Activated T-helper 2 cell treated with anti-CD3 and anti-CD28 coated beads, Interferon-gamma antibody, Interleukin-2, Interleukin-4, amounts not matched to agents 10 μg/mL and 5 μg/mL and 100 μg/mL, durations not matched to agents 14 hours and 24 hours and 36 hours (primary cell): ENCODE measurements at regions of chr13 and their contacts with region 1.

Region 1: DNA sequence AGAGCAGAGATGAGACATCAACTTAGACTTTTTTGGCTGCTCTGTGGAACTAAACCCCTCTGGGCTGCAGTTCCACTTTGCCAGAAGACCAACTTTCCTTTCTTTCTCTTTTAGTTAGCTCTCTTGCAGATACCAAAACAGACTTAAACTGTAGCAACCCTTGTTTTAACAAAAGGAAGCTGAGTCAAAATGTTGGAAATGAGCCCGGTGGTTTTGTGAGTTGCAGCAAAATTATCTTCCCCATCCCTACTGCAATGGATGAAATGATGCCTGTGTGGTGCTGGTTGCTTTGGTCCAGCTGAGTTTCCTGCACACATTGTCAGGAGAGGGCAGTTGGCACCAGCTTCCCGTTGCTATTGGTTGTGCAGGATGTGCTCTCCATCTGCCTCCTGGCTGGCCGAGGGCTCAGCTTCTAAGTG is 115.3 kb downstream of the LRCH1 start:
- DNase-seq: no peak
- H3K4me3 Mint-ChIP-seq: peak overlapping the region; percentile 68
- H3K27ac Mint-ChIP-seq: peak overlapping the region; percentile 71
- H3K4me1 Mint-ChIP-seq: peaks cover 36% of the 10 kb centered on the region
- H3K27me3 Mint-ChIP-seq: no peaks in the 10 kb centered on the region

Region 2: GRCh38 chr13:46593398-46593797 is 74.9 kb before region 1 on chr13:
- intact Hi-C with region 1: loop called (anchors 5 kb)
- DNase-seq: peak; percentile 15
- H3K4me3 Mint-ChIP-seq: no peak overlapping the region
- H3K27ac Mint-ChIP-seq: peak overlapping the region; percentile 3
- H3K4me1 Mint-ChIP-seq: peaks cover 51% of the 10 kb centered on the region
- H3K27me3 Mint-ChIP-seq: peaks cover 6% of the 10 kb centered on the region

Region 3: DNA sequence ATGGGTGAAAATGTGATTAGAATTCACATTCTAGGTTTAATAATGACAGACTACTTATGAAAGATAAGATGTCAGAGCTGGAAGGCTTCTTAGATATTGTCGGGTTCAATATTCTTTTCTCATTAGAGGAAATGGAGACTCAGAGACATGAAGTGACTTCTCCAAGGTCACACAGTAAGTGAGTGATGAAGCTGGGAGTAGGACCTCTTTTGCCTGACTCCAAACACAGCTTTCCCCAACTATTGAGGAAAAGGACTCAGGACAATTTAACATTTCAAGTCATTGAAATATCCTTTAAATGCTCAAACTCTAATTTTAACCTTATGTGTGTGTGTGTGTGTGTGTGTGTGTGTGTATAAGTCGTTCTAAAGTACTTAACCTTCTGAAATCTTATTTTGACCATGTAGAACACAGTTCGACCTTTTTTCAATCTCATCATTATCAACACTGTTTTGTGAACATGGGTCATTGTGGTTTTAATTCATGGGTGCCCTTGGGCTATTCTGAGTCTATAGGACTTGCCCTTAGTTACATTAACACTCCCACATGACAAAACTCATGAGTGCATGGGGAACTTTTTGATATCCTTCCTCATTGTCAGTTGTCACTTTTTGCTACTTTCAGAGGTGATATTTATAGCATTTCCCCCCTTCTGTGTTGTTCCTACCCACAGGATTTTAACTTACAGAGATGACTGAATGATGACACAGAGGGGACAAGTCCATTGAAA is 62.3 kb before region 1 on chr13:
- intact Hi-C with region 1: loop called (anchors 5 kb)
- DNase-seq: no peak
- H3K4me3 Mint-ChIP-seq: no peak overlapping the region
- H3K27ac Mint-ChIP-seq: peak overlapping the region; percentile 51
- H3K4me1 Mint-ChIP-seq: peaks cover 47% of the 10 kb centered on the region
- H3K27me3 Mint-ChIP-seq: no peaks in the 10 kb centered on the region

Region 4: GRCh38 chr13:46649816-46650215 is 18.5 kb before region 1 on chr13:
- intact Hi-C with region 1: loop called (anchors 2 kb)
- DNase-seq: no peak
- H3K4me3 Mint-ChIP-seq: no peak overlapping the region
- H3K27ac Mint-ChIP-seq: no peak overlapping the region
- H3K4me1 Mint-ChIP-seq: peaks cover 23% of the 10 kb centered on the region
- H3K27me3 Mint-ChIP-seq: no peaks in the 10 kb centered on the region

Region 5: GRCh38 chr13:46656786-46657185 is 11.5 kb before region 1 on chr13:
- intact Hi-C with region 1: loop called (anchors 1 kb)
- DNase-seq: no peak
- H3K4me3 Mint-ChIP-seq: no peak overlapping the region
- H3K27ac Mint-ChIP-seq: peak overlapping the region; percentile 45
- H3K4me1 Mint-ChIP-seq: peaks cover 31% of the 10 kb centered on the region
- H3K27me3 Mint-ChIP-seq: no peaks in the 10 kb centered on the region

Region 6: DNA sequence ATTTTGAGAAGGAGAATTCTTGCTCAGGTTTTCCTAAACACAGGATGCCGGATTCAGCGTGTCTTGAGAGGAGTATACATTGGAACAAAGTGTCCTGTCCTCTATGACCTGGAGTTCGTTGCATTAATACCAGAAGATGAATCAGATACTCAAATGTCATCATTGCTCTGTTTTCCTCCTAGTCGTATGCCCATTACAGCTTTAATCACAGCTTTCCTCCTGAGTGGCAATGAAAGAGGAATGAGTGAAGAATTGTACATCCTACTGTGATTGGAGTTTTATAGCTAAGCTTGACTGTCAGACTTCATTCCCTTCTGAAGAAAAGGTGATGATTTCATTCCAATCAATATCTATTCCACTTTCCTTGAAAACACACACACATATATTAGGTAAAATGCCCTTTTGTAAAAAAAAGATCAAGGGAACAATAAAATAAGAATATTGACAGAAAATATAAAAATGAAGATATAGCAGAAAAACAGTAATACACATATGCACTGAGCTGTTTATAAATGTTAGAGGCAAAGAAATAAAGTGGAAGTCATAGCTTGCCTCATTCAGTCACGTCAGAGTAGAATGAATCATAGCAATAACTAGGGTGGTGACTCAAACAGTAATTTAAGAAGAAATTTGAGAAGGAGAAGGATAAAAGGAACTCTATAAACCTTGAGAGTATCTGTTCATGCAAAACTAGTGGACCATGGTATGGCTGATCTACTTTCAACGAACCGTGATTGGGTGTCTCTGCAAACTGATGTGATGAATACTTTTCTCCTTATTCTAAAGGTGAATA is 831.2 kb after region 1 on chr13:
- intact Hi-C with region 1: no loop called
- DNase-seq: no peak
- H3K4me3 Mint-ChIP-seq: no peak overlapping the region
- H3K27ac Mint-ChIP-seq: no peak overlapping the region
- H3K4me1 Mint-ChIP-seq: no peaks in the 10 kb centered on the region
- H3K27me3 Mint-ChIP-seq: no peaks in the 10 kb centered on the region